Dorsolateral prefrontal cortex (tissue), 120 donors: ENCODE measurements at regions of chr17 and their contacts with region 1.

Region 1: DNA sequence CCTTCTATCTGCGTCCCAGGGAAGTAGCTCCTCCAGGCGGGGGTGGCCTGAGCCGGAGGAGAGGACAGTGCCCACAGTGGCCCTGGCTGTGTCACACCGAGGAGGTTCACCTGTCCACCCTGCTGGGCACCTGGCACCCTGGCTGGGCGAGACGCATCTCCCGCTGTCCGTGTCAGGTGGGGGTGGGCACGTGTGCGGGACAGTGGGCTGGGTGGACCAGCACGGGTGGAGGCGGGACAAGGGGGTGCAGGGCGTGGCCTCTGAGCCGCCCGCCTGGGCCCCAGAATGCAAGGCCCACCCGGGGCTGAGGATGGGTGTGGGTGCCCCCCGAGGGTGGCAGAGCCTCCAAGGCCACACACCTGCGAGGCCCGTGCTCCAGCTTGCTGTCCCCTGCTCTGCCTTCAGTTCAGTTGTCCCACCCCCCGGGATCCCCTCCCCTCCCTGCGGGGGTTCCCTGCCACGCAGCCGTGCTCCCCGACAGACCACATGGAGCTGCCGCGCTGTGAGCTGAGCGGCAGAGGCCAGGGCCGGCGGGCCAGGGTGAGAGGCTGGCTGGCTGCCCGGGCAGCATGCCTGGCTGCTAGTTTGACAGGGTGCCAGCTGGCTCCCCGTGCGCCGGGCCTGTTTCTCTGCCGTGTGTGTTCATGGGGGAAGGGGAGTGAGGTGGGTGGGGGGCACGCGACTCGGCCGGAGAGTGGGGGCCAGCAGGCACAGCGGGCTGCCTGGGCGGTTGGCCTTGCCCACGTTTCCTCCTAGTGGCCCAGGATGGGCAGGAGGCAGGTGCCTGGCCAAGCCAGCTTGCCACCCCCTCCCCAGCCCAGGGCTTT is 33.9 kb downstream of the BAHCC1 start:
- DNase-seq: peak; percentile 76 to 92 (median 84)
- H3K4me3 ChIP-seq: peak overlapping the region in 43 of 59 donors; percentile 1 to 51 (median 30)
- H3K27ac ChIP-seq: peak overlapping the region in 54 of 59 donors; percentile 27 to 97 (median 88)
- H3K27me3 ChIP-seq: no peaks in the 10 kb centered on the region
- CTCF ChIP-seq: peak in 1 of 56 donors; percentile 6

Region 2: GRCh38 chr17:81253358-81254131 is 175.6 kb before region 1 on chr17:
- intact Hi-C with region 1: loop called in 1 of 2 experiments (anchors 5 kb)
- DNase-seq: peak in 7 of 10 donors; percentile 34 to 71 (median 61)
- H3K4me3 ChIP-seq: no peak overlapping the region
- H3K27ac ChIP-seq: peak overlapping the region in 6 of 59 donors; percentile 4 to 81 (median 38)
- H3K27me3 ChIP-seq: no peaks in the 10 kb centered on the region
- CTCF ChIP-seq: peak; percentile 68 to 92 (median 84)

Region 3: GRCh38 chr17:81346090-81346907 is 82.9 kb before region 1 on chr17:
- intact Hi-C with region 1: no loop called
- DNase-seq: peak; percentile 97 to 100 (median 98)
- H3K4me3 ChIP-seq: peak overlapping the region; percentile 58 to 97 (median 76)
- H3K27ac ChIP-seq: peak overlapping the region in 57 of 59 donors; percentile 51 to 96 (median 88)
- H3K27me3 ChIP-seq: peaks cover 0 to 29% (median 6%) of the 10 kb centered on the region in 45 donors
- CTCF ChIP-seq: peak in 3 of 56 donors; percentile 17 to 29 (median 20)

Region 4: DNA sequence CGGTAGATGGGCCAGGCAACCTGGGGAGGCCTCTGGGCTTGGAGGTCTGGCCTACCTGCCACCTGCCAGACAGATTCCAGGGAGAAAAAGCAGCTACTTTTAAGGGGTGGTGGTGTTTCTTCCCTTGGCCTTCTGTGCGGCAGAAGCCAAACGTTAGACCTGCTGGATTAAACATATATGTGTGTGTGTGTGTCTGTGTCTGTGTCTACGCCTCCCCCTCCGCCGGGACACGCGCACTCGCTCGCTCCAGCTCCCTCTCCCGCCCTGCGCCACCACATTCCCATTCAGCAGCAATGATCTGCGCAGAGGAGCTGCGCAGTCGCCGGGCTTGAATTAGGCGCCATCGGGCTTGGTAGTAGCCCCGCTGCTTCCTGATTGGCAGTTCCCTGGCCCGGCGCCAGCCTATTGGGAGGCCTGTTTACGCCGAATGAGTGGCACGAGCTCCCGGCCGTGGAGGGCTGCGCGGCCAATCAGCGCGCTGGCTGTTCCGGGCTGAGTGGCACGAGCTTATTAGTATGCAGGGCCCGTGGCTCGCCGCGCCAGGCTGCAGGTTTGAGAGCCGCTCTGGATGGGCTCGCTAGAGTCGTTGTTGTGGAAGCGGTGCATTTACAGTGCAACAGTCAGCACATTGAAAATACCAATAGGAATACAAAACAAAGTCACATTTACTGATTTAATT is 34.1 kb before region 1 on chr17 and contains the start of gene BAHCC1:
- intact Hi-C with region 1: loop called (anchors 1 kb)
- DNase-seq: peak; percentile 100
- H3K4me3 ChIP-seq: peak within 1 kb of the TSS; percentile 65 to 91 (median 81)
- H3K27ac ChIP-seq: peak within 1 kb of the TSS; percentile 79 to 100 (median 99)
- H3K27me3 ChIP-seq: no peaks in the 10 kb centered on the region
- CTCF ChIP-seq: peak in 17 of 56 donors; percentile 9 to 40 (median 19)
- total RNA-seq, gene BAHCC1: 25.1 to 66.1 (median 38.0) TPM

Region 5: GRCh38 chr17:81412490-81413093 is 16.6 kb before region 1 on chr17:
- intact Hi-C with region 1: no loop called
- DNase-seq: no peak
- H3K4me3 ChIP-seq: no peak overlapping the region
- H3K27ac ChIP-seq: no peak overlapping the region
- H3K27me3 ChIP-seq: no peaks in the 10 kb centered on the region
- CTCF ChIP-seq: no peak

Region 6: DNA sequence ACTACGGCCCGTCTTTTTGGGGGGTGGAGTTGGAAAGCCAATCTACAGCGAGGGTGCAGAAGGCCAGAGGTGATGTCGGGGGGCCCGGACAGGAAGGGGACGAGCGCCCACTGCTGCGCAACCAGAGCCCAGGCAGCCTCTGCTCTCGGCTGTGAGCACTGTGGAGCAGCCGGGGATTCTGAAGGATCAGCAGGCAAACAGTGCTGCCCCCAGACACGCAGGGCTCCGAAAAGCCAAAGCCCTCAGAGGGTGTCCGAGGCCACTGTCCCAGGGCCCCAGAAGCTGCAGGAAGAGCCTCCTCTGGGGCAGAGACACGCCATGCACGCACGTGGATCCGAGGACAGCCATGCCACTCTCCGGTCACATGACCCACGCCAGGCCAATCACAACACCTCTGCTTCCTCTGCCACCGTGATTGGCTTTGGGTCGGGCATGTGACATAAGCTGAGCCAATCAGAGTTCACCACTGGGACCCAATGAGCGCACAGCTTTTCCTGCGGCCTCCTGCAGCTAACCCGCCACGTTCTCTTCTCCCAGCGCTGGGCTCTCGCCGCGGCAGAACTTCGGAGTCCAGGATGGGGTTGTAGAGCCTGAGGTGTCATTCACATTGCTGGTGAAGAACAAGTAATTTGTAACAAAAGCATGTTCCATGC is 42.8 kb after region 1 on chr17:
- intact Hi-C with region 1: no loop called
- DNase-seq: peak; percentile 56 to 88 (median 83)
- H3K4me3 ChIP-seq: peak overlapping the region in 54 of 59 donors; percentile 10 to 54 (median 42)
- H3K27ac ChIP-seq: peak overlapping the region in 32 of 59 donors; percentile 7 to 80 (median 64)
- H3K27me3 ChIP-seq: no peaks in the 10 kb centered on the region
- CTCF ChIP-seq: peak in 50 of 56 donors; percentile 14 to 64 (median 42)

Region 7: DNA sequence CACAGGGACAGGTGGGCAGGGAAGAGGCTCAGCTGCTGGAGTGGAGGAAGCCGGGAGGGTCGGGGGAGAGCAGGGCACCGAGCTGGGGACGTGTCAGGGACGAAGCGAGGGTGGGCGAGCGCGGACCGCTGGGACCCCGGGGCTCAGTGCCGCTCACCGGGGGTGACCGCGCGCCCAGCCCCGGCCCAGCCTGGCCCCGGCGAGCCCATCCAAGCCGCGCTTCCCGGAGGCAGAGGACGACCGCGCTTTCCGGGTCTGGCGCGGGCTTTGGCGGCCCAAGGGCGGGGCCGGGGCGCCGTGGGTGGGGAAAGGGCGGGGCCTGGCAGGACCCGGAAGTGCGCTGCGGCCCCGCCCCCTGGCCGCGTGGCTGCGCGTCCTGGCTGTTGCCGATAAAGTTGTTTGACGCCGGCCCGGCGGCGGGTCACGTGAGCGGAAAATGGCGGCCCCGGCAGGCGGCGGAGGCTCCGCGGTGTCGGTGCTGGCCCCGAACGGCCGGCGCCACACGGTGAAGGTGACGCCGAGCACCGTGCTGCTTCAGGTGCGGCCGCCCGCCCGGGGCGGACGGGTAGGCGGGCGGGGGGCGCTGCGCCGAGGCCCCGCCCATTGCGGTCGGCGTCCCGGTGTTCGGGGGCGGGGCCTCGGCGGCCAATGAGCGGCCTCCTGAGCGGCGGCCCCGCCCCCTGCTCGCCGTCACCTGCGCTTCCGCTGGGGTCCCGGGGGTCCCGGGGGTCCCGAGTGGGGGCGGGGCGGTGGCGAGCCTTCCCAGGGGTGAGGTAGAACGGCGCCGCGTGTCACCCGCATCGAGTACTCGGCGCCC is 548.3 kb after region 1 on chr17 and contains the start of gene ASPSCR1:
- intact Hi-C with region 1: loop called in 1 of 2 experiments (anchors 10 kb)
- DNase-seq: peak; percentile 70 to 93 (median 86)
- H3K4me3 ChIP-seq: peak within 1 kb of the TSS; percentile 57 to 99 (median 88)
- H3K27ac ChIP-seq: peak within 1 kb of the TSS in 56 of 59 donors; percentile 23 to 94 (median 84)
- H3K27me3 ChIP-seq: no peaks in the 10 kb centered on the region
- CTCF ChIP-seq: peak in 23 of 56 donors; percentile 11 to 59 (median 29)
- total RNA-seq, gene ASPSCR1: 30.3 to 68.2 (median 44.6) TPM